ENCODE measurements at regions of chr6 and their contacts with region 1.

Region 1: GRCh38 chr6:7051233-7052114 is 56.3 kb upstream of the RREB1 start:
- DNase-seq: peak; percentile 49 to 86 (median 65)
- ATAC-seq: peak; percentile 20 to 83 (median 75)
- H3K4me3 ChIP-seq: peak overlapping the region; percentile 47 to 75 (median 66)
- H3K27ac ChIP-seq: peak overlapping the region; percentile 33 to 92 (median 72)
- H3K4me1 ChIP-seq: peaks cover 0 to 52% (median 19%) of the 10 kb centered on the region in 12 donors
- H3K27me3 ChIP-seq: no peaks in the 10 kb centered on the region
- CTCF ChIP-seq: no peak
- POLR2A ChIP-seq: no peak

Region 2: DNA sequence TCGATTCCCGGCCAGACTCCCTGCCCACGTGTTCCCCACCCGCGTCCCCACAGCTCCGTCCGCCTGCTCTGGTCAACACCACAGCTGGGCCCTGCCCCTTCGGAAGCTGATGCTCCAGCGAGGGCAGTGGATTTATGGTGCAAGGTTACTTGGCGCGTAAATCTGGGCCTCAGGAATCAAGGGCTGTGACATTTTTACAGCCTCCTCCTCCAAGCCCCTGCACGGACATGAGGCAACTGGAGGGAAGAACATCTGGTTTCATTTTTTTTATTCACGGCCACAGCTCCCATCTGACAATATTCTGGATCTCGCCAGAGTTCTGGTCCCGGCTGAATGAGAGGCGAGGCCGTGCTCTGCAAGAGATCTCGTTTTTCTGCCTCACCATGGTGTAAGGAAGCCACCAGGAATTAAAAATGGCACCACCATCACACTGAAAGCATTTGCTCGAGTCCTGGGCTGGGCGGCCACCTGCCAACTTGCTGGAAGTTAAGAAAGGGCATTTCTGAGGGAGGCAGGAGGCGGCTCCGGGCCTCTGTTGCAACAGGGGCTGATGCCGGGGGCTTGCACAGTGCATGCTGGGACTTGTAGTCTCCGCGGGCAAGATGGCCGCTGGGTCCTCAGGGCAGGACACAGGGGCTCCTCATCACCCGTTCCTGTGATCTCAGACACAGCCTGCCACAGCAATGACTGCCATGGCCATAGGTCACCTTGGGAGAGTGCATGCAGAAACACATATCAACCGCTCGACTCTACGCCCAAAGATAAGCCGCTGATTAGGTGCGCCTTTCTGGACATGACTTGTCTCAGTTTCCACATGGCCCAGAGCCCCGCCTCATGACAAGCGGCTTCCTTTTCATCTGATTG is 314.5 kb before region 1 on chr6:
- intact Hi-C with region 1: loop called in 1 of 10 experiments (anchors 5 kb)
- DNase-seq: peak; percentile 77 to 91 (median 87)
- ATAC-seq: peak; percentile 79 to 91 (median 86)
- H3K4me3 ChIP-seq: peak overlapping the region; percentile 7 to 57 (median 42)
- H3K27ac ChIP-seq: peak overlapping the region; percentile 41 to 92 (median 82)
- H3K4me1 ChIP-seq: peaks cover 0 to 48% (median 5%) of the 10 kb centered on the region in 12 donors
- H3K27me3 ChIP-seq: no peaks in the 10 kb centered on the region
- CTCF ChIP-seq: no peak
- POLR2A ChIP-seq: no peak

Region 3: GRCh38 chr6:6927521-6928371 is 123.7 kb before region 1 on chr6:
- intact Hi-C with region 1: loop called in 2 of 10 experiments (anchors 10 kb)
- DNase-seq: peak; percentile 45 to 74 (median 48)
- ATAC-seq: peak; percentile 88 to 92 (median 90)
- H3K4me3 ChIP-seq: peak overlapping the region in 10 of 12 donors; percentile 18 to 53 (median 44)
- H3K27ac ChIP-seq: peak overlapping the region in 11 of 12 donors; percentile 61 to 86 (median 75)
- H3K4me1 ChIP-seq: peaks cover 0 to 28% (median 4%) of the 10 kb centered on the region in 12 donors
- H3K27me3 ChIP-seq: no peaks in the 10 kb centered on the region
- CTCF ChIP-seq: peak in 10 of 12 donors; percentile 6 to 43 (median 23)
- POLR2A ChIP-seq: no peak

Region 4: GRCh38 chr6:7021301-7021700 is 30.2 kb before region 1 on chr6:
- intact Hi-C with region 1: no loop called
- DNase-seq: no peak
- ATAC-seq: no peak
- H3K4me3 ChIP-seq: no peak overlapping the region
- H3K27ac ChIP-seq: no peak overlapping the region
- H3K4me1 ChIP-seq: peaks cover 0 to 9% (median 0%) of the 10 kb centered on the region in 12 donors
- H3K27me3 ChIP-seq: no peaks in the 10 kb centered on the region
- CTCF ChIP-seq: no peak
- POLR2A ChIP-seq: no peak

Region 5: DNA sequence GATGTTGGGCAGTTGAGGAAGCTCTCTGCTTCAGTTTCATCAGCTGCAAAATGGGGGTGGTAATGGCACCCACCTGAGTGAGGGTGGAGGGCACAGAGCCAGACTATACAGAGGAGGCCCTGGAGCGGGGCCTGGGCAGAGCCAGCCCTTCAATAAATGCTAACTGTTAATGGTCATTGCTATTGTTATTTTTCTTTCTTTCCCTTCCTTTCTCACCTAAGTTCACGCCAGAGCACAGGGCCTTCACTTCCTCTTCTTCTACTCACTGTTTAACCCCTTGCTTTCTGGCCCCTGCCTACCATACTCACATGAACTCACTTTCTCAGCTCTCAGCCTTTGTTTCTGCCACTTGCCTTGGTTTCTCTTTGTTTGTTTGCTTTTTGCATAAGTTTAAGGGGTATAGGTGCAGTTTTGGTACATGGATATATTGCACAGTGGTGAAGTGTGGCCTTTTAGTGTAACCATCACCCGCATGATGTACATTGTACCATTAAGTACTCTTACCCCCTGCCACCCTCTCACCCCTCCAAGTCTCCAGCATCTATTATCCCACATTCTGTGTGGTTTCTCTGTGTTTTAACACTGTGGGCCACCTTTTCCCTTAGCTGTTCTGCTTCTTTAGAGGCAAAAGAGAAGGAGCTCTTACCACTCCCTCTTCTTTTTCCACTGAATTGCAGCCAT is 48.7 kb after region 1 on chr6:
- intact Hi-C with region 1: loop called in 5 of 10 experiments (anchors 5 to 10 kb)
- DNase-seq: no peak
- ATAC-seq: no peak
- H3K4me3 ChIP-seq: no peak overlapping the region
- H3K27ac ChIP-seq: no peak overlapping the region
- H3K4me1 ChIP-seq: peaks cover 0 to 7% (median 0%) of the 10 kb centered on the region in 12 donors
- H3K27me3 ChIP-seq: no peaks in the 10 kb centered on the region
- CTCF ChIP-seq: no peak
- POLR2A ChIP-seq: no peak

Region 6: DNA sequence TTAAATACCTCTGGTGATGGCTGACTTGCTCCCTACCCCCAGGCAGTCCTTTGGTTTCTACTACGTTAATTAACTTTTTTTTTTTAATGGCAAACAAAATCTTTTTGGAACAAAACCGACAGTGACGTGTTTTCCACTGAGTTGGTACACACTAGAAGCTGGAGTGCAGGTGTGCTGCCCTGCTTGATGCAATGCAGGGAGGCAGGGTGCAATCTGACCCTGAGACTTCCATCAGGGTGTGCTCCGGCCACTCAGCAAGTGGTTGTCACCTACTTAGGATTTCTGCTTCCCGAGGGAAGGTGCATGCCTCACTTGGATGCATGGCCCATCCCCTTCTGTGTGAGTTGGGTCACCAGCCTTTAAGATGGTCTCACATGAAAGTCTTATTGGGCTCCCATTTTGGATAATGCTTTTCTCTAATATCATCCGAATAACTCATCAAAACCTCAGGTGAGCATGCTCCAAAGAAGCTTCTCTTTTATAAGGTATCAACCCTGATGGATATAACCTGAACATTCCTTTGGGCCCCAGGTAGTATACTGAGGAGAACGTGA is 70.3 kb after region 1 on chr6:
- intact Hi-C with region 1: no loop called
- DNase-seq: no peak
- ATAC-seq: peak in 1 of 4 donors; percentile 27
- H3K4me3 ChIP-seq: no peak overlapping the region
- H3K27ac ChIP-seq: no peak overlapping the region
- H3K4me1 ChIP-seq: peaks cover 0 to 62% (median 36%) of the 10 kb centered on the region in 12 donors
- H3K27me3 ChIP-seq: no peaks in the 10 kb centered on the region
- CTCF ChIP-seq: no peak
- POLR2A ChIP-seq: no peak